ENCODE measurements at regions of chr10 and their contacts with region 1.

Region 1: GRCh38 chr10:23158370-23158769 is 33.7 kb upstream of the PTF1A start:
- DNase-seq: peak; percentile 42
- H3K4me3 Mint-ChIP-seq: no peak overlapping the region
- H3K27ac Mint-ChIP-seq: no peak overlapping the region
- H3K4me1 Mint-ChIP-seq: peaks cover 7% of the 10 kb centered on the region
- H3K27me3 Mint-ChIP-seq: peaks cover 19% of the 10 kb centered on the region

Region 2: GRCh38 chr10:23081891-23082290 is 76.5 kb before region 1 on chr10:
- CTCF ChIA-PET with region 1: no interaction called
- POLR2A ChIA-PET with region 1: no interaction called
- DNase-seq: no peak
- H3K4me3 Mint-ChIP-seq: no peak overlapping the region
- H3K27ac Mint-ChIP-seq: no peak overlapping the region
- H3K4me1 Mint-ChIP-seq: no peaks in the 10 kb centered on the region
- H3K27me3 Mint-ChIP-seq: peaks cover 46% of the 10 kb centered on the region

Region 3: DNA sequence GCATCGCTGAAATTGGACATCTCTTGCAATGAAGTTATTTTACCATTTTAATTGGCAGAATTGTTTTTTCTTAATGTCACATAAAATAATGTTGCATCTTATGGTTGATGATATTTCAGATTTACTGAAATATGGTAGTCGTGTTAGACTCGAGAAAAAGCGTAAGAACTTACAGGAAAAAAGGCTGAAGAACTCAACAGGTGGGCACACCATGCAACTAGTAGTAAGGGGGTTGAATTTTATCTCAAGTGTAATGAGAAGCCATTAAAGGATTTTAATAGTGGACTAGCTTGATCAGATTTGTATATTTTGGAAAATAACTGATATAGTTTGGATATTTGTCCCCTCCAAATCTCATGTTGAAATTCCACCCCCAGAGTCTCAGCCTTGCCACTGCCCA is 21.9 kb before region 1 on chr10:
- CTCF ChIA-PET with region 1: no interaction called
- POLR2A ChIA-PET with region 1: no interaction called
- DNase-seq: no peak
- H3K4me3 Mint-ChIP-seq: no peak overlapping the region
- H3K27ac Mint-ChIP-seq: no peak overlapping the region
- H3K4me1 Mint-ChIP-seq: no peaks in the 10 kb centered on the region
- H3K27me3 Mint-ChIP-seq: peaks cover 14% of the 10 kb centered on the region

Region 4: DNA sequence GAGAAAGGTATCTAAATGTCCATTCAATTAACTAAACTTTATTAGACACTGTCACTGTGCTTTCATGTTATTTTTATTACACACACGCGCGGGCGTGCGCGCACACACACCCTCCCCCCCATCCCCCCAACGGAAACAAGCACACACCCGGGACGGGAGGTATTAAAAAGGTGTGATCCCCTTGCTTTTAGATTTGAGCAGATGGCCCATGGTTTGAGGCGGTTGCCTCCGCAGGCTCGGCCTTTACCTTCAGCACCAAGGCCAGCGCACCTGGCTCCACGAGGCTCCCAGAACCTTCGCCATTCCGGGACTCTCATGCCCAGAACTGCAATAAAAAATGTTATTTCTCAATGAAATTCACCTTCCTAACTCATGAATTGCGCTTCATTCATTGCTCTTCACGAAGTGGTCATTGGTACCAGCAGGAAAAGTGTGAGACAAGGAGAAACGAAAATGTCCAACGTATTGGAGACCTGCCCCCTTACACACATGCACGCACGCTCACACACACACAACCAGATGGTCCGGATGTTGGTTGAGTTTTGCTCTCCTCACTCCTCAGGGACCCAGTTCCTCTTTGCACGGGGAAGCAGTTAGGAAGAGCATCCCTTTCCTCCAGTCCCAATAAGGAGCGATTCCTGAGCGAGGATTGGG is 13.0 kb after region 1 on chr10:
- CTCF ChIA-PET with region 1: interaction called, 19 read pairs
- POLR2A ChIA-PET with region 1: no interaction called
- DNase-seq: no peak
- H3K4me3 Mint-ChIP-seq: no peak overlapping the region
- H3K27ac Mint-ChIP-seq: no peak overlapping the region
- H3K4me1 Mint-ChIP-seq: no peaks in the 10 kb centered on the region
- H3K27me3 Mint-ChIP-seq: peaks cover 56% of the 10 kb centered on the region

Region 5: GRCh38 chr10:23293145-23293724 is 134.9 kb after region 1 on chr10:
- CTCF ChIA-PET with region 1: interaction called, 35 read pairs
- POLR2A ChIA-PET with region 1: no interaction called
- DNase-seq: peak; percentile 26
- H3K4me3 Mint-ChIP-seq: no peak overlapping the region
- H3K27ac Mint-ChIP-seq: no peak overlapping the region
- H3K4me1 Mint-ChIP-seq: no peaks in the 10 kb centered on the region
- H3K27me3 Mint-ChIP-seq: peaks cover 17% of the 10 kb centered on the region